H1 (cell line): ENCODE measurements at regions of chr1 and their contacts with region 1.

Region 1: GRCh38 chr1:56550138-56550858 is 29.1 kb downstream of the PLPP3 start:
- DNase-seq: peak; percentile 61 to 62
- H3K4me3 ChIP-seq: peak overlapping the region in 3 of 4 experiments; percentile 3 to 38 (median 5); a peak in 4 of 8 replicates
- H3K27ac ChIP-seq: peak overlapping the region; percentile 64
- H3K4me1 ChIP-seq: peaks cover 20 to 55% (median 47%) of the 10 kb centered on the region in 4 experiments; a peak in 6 of 7 replicates
- H3K27me3 ChIP-seq: no peaks in the 10 kb centered on the region
- CTCF ChIP-seq: no peak
- EP300 ChIP-seq: peak in 1 of 2 experiments; percentile 93; a peak in 1 of 3 replicates
- POLR2A ChIP-seq: peak in 1 of 2 experiments; percentile 44; a peak in 1 of 3 replicates
- RAD21 ChIP-seq: peak in 1 of 2 experiments; percentile 20; a peak in 1 of 4 replicates

Region 2: DNA sequence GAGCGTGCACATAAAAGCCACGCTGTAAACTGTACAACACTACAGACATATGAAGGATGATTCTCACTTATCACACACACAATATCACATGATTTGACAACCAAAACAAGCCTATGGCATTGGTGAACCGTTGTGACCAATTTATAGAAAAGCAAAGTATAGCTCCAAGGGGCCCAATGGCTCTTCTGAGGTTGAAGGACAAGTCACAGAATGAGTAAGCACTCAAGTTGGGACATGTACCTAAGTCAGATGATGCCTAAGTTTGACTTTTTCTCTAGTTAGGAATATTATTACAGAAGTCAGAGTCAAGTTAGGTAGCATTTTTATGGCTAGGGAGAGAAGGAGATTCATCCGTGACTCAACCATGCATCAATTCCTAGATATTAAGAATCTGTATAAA is 16.7 kb before region 1 on chr1:
- CTCF ChIA-PET with region 1: interaction called, 5 read pairs
- POLR2A ChIA-PET with region 1: interaction called, 25 read pairs
- DNase-seq: no peak
- H3K4me3 ChIP-seq: no peak overlapping the region
- H3K27ac ChIP-seq: 0 out of 2 replicates have a peak overlapping the region, but pooled peaks have one; percentile 6
- H3K4me1 ChIP-seq: peaks cover 12 to 60% (median 53%) of the 10 kb centered on the region in 4 experiments
- H3K27me3 ChIP-seq: no peaks in the 10 kb centered on the region
- CTCF ChIP-seq: no peak
- EP300 ChIP-seq: no peak
- POLR2A ChIP-seq: no peak
- RAD21 ChIP-seq: no peak

Region 3: GRCh38 chr1:56539520-56539931 is 10.8 kb before region 1 on chr1:
- CTCF ChIA-PET with region 1: interaction called, 5 read pairs
- POLR2A ChIA-PET with region 1: interaction called, 25 read pairs
- DNase-seq: no peak
- H3K4me3 ChIP-seq: no peak overlapping the region
- H3K27ac ChIP-seq: no peak overlapping the region
- H3K4me1 ChIP-seq: peaks cover 15 to 42% (median 39%) of the 10 kb centered on the region in 4 experiments
- H3K27me3 ChIP-seq: no peaks in the 10 kb centered on the region
- CTCF ChIP-seq: no peak
- EP300 ChIP-seq: no peak
- POLR2A ChIP-seq: no peak
- RAD21 ChIP-seq: no peak

Region 4: DNA sequence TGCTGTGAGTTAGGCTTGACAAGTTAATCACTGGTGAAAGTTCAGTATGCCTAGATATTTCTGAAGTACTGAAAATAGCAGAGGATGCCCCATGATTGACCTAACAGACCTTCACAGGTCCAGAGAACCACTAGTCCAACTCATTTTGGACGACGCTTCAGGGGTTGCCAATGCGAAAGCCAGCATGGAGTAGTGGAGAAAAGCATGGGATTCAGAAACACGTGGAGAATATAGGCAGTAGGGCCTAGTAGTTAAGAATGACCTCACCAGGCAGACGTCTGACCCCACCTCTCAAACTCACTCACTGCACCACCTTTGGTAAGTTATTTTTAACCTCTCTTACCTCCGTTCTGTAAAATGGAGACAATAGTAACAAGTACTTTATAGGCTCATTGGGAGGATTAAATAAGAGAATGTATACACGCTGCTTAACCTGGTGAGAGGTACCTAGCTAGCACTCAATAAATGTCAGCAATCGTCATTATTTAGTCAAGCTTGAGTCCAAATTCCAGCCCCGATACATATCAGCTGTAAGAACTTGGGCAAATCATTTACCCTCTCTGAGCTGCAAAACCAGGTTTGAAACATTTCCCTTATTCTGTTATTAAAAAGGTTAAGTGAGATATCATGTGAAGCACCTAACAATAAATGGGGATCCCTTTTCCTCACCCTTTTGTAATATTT is 15.9 kb after region 1 on chr1:
- CTCF ChIA-PET with region 1: interaction called, 4 read pairs
- POLR2A ChIA-PET with region 1: interaction called, 21 read pairs
- DNase-seq: no peak
- H3K4me3 ChIP-seq: 0 out of 8 replicates have a peak overlapping the region, but pooled peaks of 1 of the 4 experiments have one; percentile 9
- H3K27ac ChIP-seq: peak overlapping the region; percentile 17; the same call in 1 of the 2 replicates
- H3K4me1 ChIP-seq: peaks cover 4 to 44% (median 37%) of the 10 kb centered on the region in 4 experiments; a peak in 6 of 7 replicates
- H3K27me3 ChIP-seq: no peaks in the 10 kb centered on the region
- CTCF ChIP-seq: no peak
- EP300 ChIP-seq: no peak
- POLR2A ChIP-seq: no peak
- RAD21 ChIP-seq: no peak

Region 5: DNA sequence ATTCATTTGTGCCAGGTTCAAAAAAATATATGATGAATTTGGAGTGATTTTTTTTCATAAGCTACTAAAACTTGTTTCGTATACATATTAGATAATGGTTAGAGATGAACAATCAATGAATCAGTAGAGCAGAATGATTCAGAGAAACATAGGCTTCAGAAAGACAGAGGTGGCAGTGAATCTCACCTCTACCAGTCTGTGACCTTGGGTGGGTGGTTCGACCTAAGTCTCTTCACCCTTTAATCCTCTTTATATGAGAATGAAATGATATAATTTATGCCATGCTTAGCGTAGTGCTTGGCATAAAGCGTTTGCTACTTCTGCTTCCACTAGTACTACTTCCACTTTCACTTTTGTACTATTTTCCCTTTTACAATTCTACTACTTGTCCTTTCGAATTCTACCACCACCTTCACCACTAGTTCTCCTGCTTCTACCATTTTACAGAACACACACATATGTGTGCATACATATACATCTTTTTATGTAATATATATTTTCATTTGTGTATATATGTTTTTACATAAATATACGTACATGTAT is 223.8 kb after region 1 on chr1:
- CTCF ChIA-PET with region 1: no interaction called
- POLR2A ChIA-PET with region 1: no interaction called
- DNase-seq: no peak
- H3K4me3 ChIP-seq: no peak overlapping the region
- H3K27ac ChIP-seq: no peak overlapping the region
- H3K4me1 ChIP-seq: no peaks in the 10 kb centered on the region
- H3K27me3 ChIP-seq: no peaks in the 10 kb centered on the region
- CTCF ChIP-seq: no peak
- EP300 ChIP-seq: no peak
- POLR2A ChIP-seq: no peak
- RAD21 ChIP-seq: no peak

Region 6: DNA sequence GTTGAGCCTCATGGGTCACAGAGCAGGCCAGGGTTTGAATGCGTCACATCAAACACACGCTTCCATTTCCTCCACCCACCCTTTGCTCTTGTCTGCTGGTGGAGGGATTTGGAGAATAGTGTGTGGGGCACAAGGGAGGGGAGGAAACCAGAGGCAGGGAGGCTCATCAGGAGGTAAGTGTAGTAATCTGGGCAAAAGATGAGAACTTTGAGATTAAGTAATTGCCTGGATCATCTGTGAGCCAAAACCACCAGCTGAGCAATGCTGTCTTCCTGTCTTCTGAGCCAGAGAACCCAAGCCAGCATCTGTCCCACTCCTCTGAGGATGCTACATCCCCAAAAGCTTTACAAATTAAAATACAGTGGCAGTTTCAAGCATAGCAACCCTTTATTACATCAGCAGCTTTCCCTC is 370.3 kb after region 1 on chr1:
- CTCF ChIA-PET with region 1: no interaction called
- POLR2A ChIA-PET with region 1: no interaction called
- DNase-seq: no peak
- H3K4me3 ChIP-seq: no peak overlapping the region
- H3K27ac ChIP-seq: no peak overlapping the region
- H3K4me1 ChIP-seq: peaks cover 0 to 5% (median 2%) of the 10 kb centered on the region in 4 experiments; a peak in 2 of 7 replicates
- H3K27me3 ChIP-seq: no peaks in the 10 kb centered on the region
- CTCF ChIP-seq: no peak
- EP300 ChIP-seq: no peak
- POLR2A ChIP-seq: no peak
- RAD21 ChIP-seq: no peak